Heart left ventricle (tissue), 16 donors: ENCODE measurements at regions of chr1 and their contacts with region 1.

Region 1: GRCh38 chr1:84143796-84144565 is at the start of gene PRKACB:
- DNase-seq: no peak
- ATAC-seq: peak in 3 of 4 donors; percentile 56 to 67 (median 64)
- H3K4me3 ChIP-seq: peak within 1 kb of the TSS in 6 of 12 donors; percentile 0 to 52 (median 24)
- H3K27ac ChIP-seq: peak within 1 kb of the TSS in 1 of 12 donors; percentile 87
- H3K4me1 ChIP-seq: peaks cover 0 to 26% (median 0%) of the 10 kb centered on the region in 12 donors
- H3K27me3 ChIP-seq: no peaks in the 10 kb centered on the region
- CTCF ChIP-seq: no peak
- POLR2A ChIP-seq: no peak
- total RNA-seq, gene PRKACB: 16.6 to 52.3 (median 41.1) TPM

Region 2: GRCh38 chr1:84223751-84224432 is 79.9 kb after region 1 on chr1:
- intact Hi-C with region 1: no loop called
- DNase-seq: no peak
- ATAC-seq: no peak
- H3K4me3 ChIP-seq: no peak overlapping the region
- H3K27ac ChIP-seq: no peak overlapping the region
- H3K4me1 ChIP-seq: no peaks in the 10 kb centered on the region
- H3K27me3 ChIP-seq: no peaks in the 10 kb centered on the region
- CTCF ChIP-seq: no peak
- POLR2A ChIP-seq: no peak

Region 3: GRCh38 chr1:84763912-84764663 is 620.1 kb after region 1 on chr1:
- intact Hi-C with region 1: loop called in 6 of 10 experiments (anchors 5 to 10 kb)
- DNase-seq: no peak
- ATAC-seq: no peak
- H3K4me3 ChIP-seq: no peak overlapping the region
- H3K27ac ChIP-seq: no peak overlapping the region
- H3K4me1 ChIP-seq: peaks cover 0 to 8% (median 0%) of the 10 kb centered on the region in 12 donors
- H3K27me3 ChIP-seq: peaks cover 0 to 7% (median 0%) of the 10 kb centered on the region in 9 donors
- CTCF ChIP-seq: no peak
- POLR2A ChIP-seq: no peak